ENCODE measurements at regions of chr5 and their contacts with region 1.

Region 1: GRCh38 chr5:135829681-135830383 is 4.6 kb upstream of the SLC25A48 start:
- DNase-seq: peak; percentile 57
- H3K4me3 ChIP-seq: no peak overlapping the region
- H3K27ac ChIP-seq: no peak overlapping the region
- H3K4me1 ChIP-seq: peaks cover 9% of the 10 kb centered on the region
- H3K27me3 ChIP-seq: peaks cover 48% of the 10 kb centered on the region
- CTCF ChIP-seq: peak; percentile 82

Region 2: DNA sequence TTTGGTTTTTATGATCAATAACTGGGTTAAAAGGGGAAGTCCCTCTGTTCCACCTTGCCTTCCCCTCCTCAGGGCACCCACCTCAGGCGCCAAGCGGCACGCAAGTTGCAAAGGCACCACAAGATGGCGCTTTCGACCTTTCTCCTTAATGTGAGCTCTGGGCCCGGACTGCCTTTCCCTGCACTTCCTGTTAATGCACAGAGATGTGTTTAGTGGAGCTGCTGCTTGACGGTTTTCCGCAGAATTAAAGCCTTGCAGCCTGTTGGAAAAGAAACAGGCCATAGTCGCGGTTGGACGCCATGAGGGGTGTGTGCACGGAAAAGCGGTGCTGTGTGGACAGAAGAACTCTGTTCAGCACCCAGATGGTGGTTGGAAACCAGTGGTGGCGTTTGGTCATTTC is 269.0 kb before region 1 on chr5:
- intact Hi-C with region 1: loop called (anchors 5 kb)
- DNase-seq: peak; percentile 66
- H3K4me3 ChIP-seq: no peak overlapping the region
- H3K27ac ChIP-seq: no peak overlapping the region
- H3K4me1 ChIP-seq: no peaks in the 10 kb centered on the region
- H3K27me3 ChIP-seq: peaks cover 63% of the 10 kb centered on the region
- CTCF ChIP-seq: peak; percentile 87

Region 3: GRCh38 chr5:135678640-135679268 is 151.1 kb before region 1 on chr5:
- intact Hi-C with region 1: no loop called
- DNase-seq: no peak
- H3K4me3 ChIP-seq: no peak overlapping the region
- H3K27ac ChIP-seq: no peak overlapping the region
- H3K4me1 ChIP-seq: no peaks in the 10 kb centered on the region
- H3K27me3 ChIP-seq: no peaks in the 10 kb centered on the region
- CTCF ChIP-seq: no peak